ENCODE measurements at regions of chr1 and their contacts with region 1.

Region 1: GRCh38 chr1:227734856-227735538 is at the starts of genes JMJD4 and SNAP47:
- DNase-seq: peak; percentile 97
- ATAC-seq: peak; percentile 91
- H3K4me3 Mint-ChIP-seq: peak within 1 kb of the TSS; percentile 87
- H3K27ac Mint-ChIP-seq: peak within 1 kb of the TSS; percentile 78
- H3K4me1 Mint-ChIP-seq: peaks cover 42% of the 10 kb centered on the region
- H3K27me3 Mint-ChIP-seq: no peaks in the 10 kb centered on the region
- CTCF ChIP-seq: no peak
- total RNA-seq, gene JMJD4: 23.5 and 26.7 TPM in 2 replicates
- total RNA-seq, gene SNAP47: 24.2 and 24.3 TPM in 2 replicates

Region 2: GRCh38 chr1:227563324-227564201 is 171.4 kb before region 1 on chr1 and contains the start of gene ZNF678:
- CTCF ChIA-PET with region 1: no interaction called
- POLR2A ChIA-PET with region 1: interaction called, 6 read pairs
- intact Hi-C with region 1: loop called (anchors 1 kb)
- DNase-seq: peak; percentile 77
- ATAC-seq: peak; percentile 89
- H3K4me3 Mint-ChIP-seq: peak within 1 kb of the TSS; percentile 95
- H3K27ac Mint-ChIP-seq: peak within 1 kb of the TSS; percentile 94
- H3K4me1 Mint-ChIP-seq: peaks cover 48% of the 10 kb centered on the region
- H3K27me3 Mint-ChIP-seq: peaks cover 8% of the 10 kb centered on the region
- CTCF ChIP-seq: no peak
- total RNA-seq, gene ZNF678: 15.4 and 20.3 TPM in 2 replicates

Region 3: DNA sequence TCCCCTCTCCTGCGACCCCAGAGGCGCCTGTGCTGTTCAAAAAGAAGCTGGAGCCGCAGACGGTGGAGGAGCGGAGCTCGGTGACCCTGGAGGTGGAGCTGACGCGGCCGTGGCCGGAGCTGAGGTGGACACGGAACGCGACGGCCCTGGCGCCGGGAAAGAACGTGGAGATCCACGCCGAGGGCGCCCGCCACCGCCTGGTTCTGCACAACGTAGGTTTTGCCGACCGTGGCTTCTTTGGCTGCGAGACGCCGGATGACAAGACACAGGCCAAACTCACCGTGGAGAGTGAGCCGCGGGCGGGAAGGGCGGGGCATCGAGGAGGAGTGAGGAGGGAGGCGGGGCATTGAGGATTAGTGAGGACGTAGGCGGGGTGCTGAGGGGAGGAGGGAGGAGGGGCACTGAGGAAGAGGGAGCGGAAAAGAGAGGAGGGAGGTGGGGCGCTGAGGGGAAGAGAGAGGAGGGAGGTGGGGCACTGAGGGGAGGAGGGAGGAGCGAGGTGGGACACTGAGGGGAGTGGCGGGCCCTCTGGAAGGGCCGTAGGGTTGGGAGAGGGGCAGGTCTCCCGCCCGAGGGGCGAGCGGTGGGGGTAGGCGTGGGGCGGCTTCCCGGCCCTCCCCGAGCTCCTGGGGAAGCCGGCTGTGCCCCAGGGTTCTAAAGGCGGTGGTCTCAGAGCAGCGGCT is 540.9 kb after region 1 on chr1:
- CTCF ChIA-PET with region 1: no interaction called
- POLR2A ChIA-PET with region 1: no interaction called
- intact Hi-C with region 1: loop called (anchors 5 kb)
- DNase-seq: peak; percentile 66
- ATAC-seq: peak; percentile 98
- H3K4me3 Mint-ChIP-seq: peak overlapping the region; percentile 82
- H3K27ac Mint-ChIP-seq: no peak overlapping the region
- H3K4me1 Mint-ChIP-seq: peaks cover 8% of the 10 kb centered on the region
- H3K27me3 Mint-ChIP-seq: no peaks in the 10 kb centered on the region
- CTCF ChIP-seq: no peak

Measured in activated B cell treated with CpG ODN at 0.5 μM for 24 hours (primary cell).